ENCODE measurements at regions of chr6 and their contacts with region 1.

Region 1: DNA sequence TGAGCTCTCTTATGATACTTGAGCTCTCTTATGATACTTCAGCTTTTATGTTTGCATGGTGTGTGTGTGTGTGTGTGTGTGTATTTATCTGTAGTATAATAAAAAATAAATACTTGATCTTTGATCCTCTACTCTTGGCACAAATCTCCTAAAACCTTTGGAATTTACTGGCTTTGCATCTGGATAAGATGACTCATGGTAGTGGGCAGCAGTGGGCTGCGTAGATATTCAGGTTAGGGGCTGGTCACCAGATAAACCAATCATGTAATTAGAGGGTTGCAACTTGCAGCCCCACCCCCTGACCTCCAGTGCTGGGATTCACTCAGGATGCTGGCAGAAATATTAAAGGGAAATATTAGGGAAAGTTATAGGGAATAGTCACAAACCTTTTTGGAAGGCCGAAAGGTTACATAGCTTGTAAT is 151.9 kb upstream of the COL21A1 start:
- DNase-seq: peak; percentile 93
- ATAC-seq: peak; percentile 88
- H3K4me3 ChIP-seq: peak overlapping the region; percentile 11 to 52 (median 29); a peak in 3 of 6 replicates
- H3K27ac ChIP-seq: peak overlapping the region; percentile 97
- H3K4me1 ChIP-seq: peaks cover 77% of the 10 kb centered on the region
- H3K27me3 ChIP-seq: no peaks in the 10 kb centered on the region
- CTCF ChIP-seq: no peak
- EP300 ChIP-seq: peak in 1 of 2 experiments; percentile 40; a peak in 1 of 4 replicates
- POLR2A ChIP-seq: no peak
- RAD21 ChIP-seq: no peak

Region 2: DNA sequence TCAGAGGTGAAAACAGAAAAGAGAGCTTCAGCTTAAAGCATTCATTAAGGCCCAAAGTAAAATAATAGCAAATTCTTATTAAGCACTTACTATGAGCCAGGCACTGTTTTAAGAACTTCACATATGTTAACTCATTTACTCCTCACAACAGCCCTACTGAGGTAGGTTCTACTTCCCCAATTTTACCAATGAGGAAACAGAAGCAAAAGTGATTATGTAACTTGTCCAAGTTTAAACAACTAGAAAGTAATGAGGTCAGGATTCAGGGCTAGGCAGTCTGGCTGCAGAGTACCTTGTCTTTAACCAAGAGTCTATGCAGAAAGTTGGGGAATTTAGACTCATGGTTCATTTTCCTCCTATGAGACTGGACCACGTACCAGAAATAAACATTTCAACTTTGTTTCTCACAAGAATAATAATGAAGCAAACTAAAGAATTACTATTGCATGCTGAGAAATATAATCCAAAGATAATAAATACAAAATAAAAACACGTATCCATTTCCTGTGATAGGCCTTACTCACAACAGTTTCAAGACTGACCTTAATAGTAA is 155.7 kb before region 1 on chr6:
- CTCF ChIA-PET with region 1: no interaction called
- POLR2A ChIA-PET with region 1: no interaction called
- in situ Hi-C with region 1: no loop called
- intact Hi-C with region 1: no loop called
- DNase-seq: no peak
- ATAC-seq: no peak
- H3K4me3 ChIP-seq: no peak overlapping the region
- H3K27ac ChIP-seq: no peak overlapping the region
- H3K4me1 ChIP-seq: 0 out of 2 replicates have a peak, but pooled peaks cover 8% of the 10 kb centered on the region
- H3K27me3 ChIP-seq: peaks cover 0 to 11% of the 10 kb centered on the region in 2 experiments; a peak in 1 of 5 replicates
- CTCF ChIP-seq: no peak
- EP300 ChIP-seq: no peak
- POLR2A ChIP-seq: no peak
- RAD21 ChIP-seq: no peak

Region 3: GRCh38 chr6:56381840-56382251 is 17.4 kb before region 1 on chr6:
- CTCF ChIA-PET with region 1: no interaction called
- POLR2A ChIA-PET with region 1: interaction called, 15 read pairs
- in situ Hi-C with region 1: no loop called
- intact Hi-C with region 1: loop called (anchors 1 kb)
- DNase-seq: peak; percentile 81
- ATAC-seq: peak; percentile 47
- H3K4me3 ChIP-seq: no peak overlapping the region
- H3K27ac ChIP-seq: peak overlapping the region; percentile 67
- H3K4me1 ChIP-seq: peaks cover 90% of the 10 kb centered on the region
- H3K27me3 ChIP-seq: no peaks in the 10 kb centered on the region
- CTCF ChIP-seq: no peak
- EP300 ChIP-seq: no peak; a peak in 1 of 4 replicates
- POLR2A ChIP-seq: no peak
- RAD21 ChIP-seq: no peak

Region 4: DNA sequence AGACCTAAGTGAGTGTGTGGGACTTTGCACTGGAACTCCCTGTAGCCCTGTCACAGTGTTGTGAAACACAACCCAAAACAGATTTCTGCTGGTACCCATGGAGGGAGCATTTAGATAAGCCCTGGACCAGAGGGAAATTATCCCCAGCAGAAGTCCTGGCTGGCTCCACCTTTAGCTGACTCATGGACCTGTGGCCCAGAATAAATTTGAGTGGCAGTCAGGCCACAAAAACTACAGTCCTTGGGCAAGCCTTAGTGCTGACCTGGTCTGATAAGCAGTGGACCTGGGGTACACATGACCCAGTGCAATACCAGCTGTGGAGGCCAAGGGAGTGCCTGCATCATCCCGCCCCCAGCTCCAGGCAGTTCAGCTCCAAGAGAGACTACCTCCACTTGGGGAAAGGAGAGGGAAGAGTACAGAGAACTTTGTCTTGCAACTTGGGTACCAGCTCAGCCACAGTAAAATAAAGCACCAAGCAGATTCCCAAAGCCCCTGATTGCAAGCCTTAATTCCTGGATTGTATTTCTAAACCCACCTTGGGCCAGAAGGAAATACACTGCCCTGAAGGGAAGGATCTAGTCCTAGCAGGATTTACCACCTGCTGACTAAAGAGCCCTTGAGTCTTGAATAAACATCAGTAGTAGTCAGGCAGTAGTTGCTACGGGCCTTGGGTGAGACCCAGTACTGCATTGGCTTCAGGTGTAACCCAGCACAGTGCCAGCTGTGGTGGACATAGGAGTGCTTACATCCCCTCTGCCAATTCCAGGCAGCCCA is 11.5 kb before region 1 on chr6:
- CTCF ChIA-PET with region 1: no interaction called
- POLR2A ChIA-PET with region 1: interaction called, 9 read pairs
- in situ Hi-C with region 1: no loop called
- intact Hi-C with region 1: loop called (anchors 1 kb)
- DNase-seq: peak; percentile 84
- ATAC-seq: peak; percentile 96
- H3K4me3 ChIP-seq: peak overlapping the region in 1 of 3 experiments; percentile 6; a peak in 1 of 6 replicates
- H3K27ac ChIP-seq: peak overlapping the region; percentile 48
- H3K4me1 ChIP-seq: peaks cover 57% of the 10 kb centered on the region
- H3K27me3 ChIP-seq: no peaks in the 10 kb centered on the region
- CTCF ChIP-seq: no peak; the same call in 1 of the 2 replicates
- EP300 ChIP-seq: peak in 1 of 2 experiments; percentile 59; a peak in 2 of 4 replicates
- POLR2A ChIP-seq: no peak
- RAD21 ChIP-seq: no peak

Region 5: DNA sequence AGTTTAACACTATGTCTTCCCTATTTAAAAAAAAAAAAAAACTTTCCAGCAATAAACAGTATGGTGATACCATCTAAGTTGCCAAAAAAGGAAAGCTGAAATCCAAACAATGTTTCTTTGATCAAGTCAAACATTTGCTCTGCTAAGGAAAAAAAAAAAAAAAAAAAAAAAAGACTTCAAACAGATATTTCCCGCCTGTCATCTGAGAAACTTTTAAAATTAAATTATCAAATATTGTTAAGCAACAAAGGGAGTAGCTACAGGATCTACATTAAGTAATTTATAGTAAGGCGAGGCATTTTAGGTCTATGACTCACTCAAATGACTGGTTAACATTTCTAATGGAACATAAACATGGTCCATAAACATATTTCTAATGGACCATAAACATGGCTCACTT is 122.2 kb after region 1 on chr6:
- CTCF ChIA-PET with region 1: no interaction called
- POLR2A ChIA-PET with region 1: interaction called, 10 read pairs
- in situ Hi-C with region 1: no loop called
- intact Hi-C with region 1: no loop called
- DNase-seq: peak; percentile 83
- ATAC-seq: peak; percentile 77
- H3K4me3 ChIP-seq: no peak overlapping the region
- H3K27ac ChIP-seq: peak overlapping the region; percentile 34
- H3K4me1 ChIP-seq: peaks cover 40% of the 10 kb centered on the region
- H3K27me3 ChIP-seq: no peaks in the 10 kb centered on the region
- CTCF ChIP-seq: no peak
- EP300 ChIP-seq: peak in 1 of 2 experiments; percentile 80; a peak in 2 of 4 replicates
- POLR2A ChIP-seq: no peak
- RAD21 ChIP-seq: no peak

Measured in HepG2 (cell line).